MCF 10A (cell line): ENCODE measurements at regions of chr7 and their contacts with region 1.

Region 1: GRCh38 chr7:36021367-36021766 is 131.7 kb upstream of the EEPD1 start:
- DNase-seq: peak; percentile 39
- H3K4me3 Mint-ChIP-seq: no peak overlapping the region
- H3K27ac Mint-ChIP-seq: no peak overlapping the region
- H3K4me1 Mint-ChIP-seq: peaks cover 8% of the 10 kb centered on the region
- H3K27me3 Mint-ChIP-seq: no peaks in the 10 kb centered on the region
- CTCF ChIP-seq: peak; percentile 54

Region 2: GRCh38 chr7:35630024-35630972 is 391.1 kb before region 1 on chr7:
- CTCF ChIA-PET with region 1: no interaction called
- POLR2A ChIA-PET with region 1: no interaction called
- intact Hi-C with region 1: no loop called
- DNase-seq: peak; percentile 54
- H3K4me3 Mint-ChIP-seq: no peak overlapping the region
- H3K27ac Mint-ChIP-seq: no peak overlapping the region
- H3K4me1 Mint-ChIP-seq: peaks cover 6% of the 10 kb centered on the region
- H3K27me3 Mint-ChIP-seq: no peaks in the 10 kb centered on the region
- CTCF ChIP-seq: no peak

Region 3: GRCh38 chr7:35753761-35754603 is 267.4 kb before region 1 on chr7:
- CTCF ChIA-PET with region 1: no interaction called
- POLR2A ChIA-PET with region 1: no interaction called
- intact Hi-C with region 1: no loop called
- DNase-seq: no peak
- H3K4me3 Mint-ChIP-seq: no peak overlapping the region
- H3K27ac Mint-ChIP-seq: no peak overlapping the region
- H3K4me1 Mint-ChIP-seq: no peaks in the 10 kb centered on the region
- H3K27me3 Mint-ChIP-seq: no peaks in the 10 kb centered on the region
- CTCF ChIP-seq: no peak

Region 4: DNA sequence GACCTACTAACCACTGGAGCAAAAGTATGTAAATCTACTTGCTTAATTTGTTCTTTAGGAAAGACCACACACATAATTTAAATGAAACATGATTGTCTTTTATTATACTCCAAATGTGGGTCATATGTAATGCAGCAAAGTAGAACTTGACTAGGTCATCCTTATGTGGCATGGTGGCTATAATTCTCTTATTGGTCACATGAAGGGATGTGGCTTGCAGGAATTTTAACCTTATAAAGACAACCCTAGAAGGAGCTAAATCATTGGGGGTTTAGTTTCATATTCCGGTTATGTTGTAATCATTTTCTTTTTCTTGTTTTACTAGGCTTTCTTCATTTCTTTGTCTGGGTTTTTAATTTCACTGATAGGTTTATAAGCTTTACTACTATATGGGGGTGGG is 126.6 kb before region 1 on chr7:
- CTCF ChIA-PET with region 1: no interaction called
- POLR2A ChIA-PET with region 1: no interaction called
- intact Hi-C with region 1: no loop called
- DNase-seq: no peak
- H3K4me3 Mint-ChIP-seq: no peak overlapping the region
- H3K27ac Mint-ChIP-seq: no peak overlapping the region
- H3K4me1 Mint-ChIP-seq: peaks cover 5% of the 10 kb centered on the region
- H3K27me3 Mint-ChIP-seq: no peaks in the 10 kb centered on the region
- CTCF ChIP-seq: no peak

Region 5: GRCh38 chr7:36057323-36057722 is 36.0 kb after region 1 on chr7:
- CTCF ChIA-PET with region 1: no interaction called
- POLR2A ChIA-PET with region 1: no interaction called
- intact Hi-C with region 1: no loop called
- DNase-seq: no peak
- H3K4me3 Mint-ChIP-seq: no peak overlapping the region
- H3K27ac Mint-ChIP-seq: no peak overlapping the region
- H3K4me1 Mint-ChIP-seq: peaks cover 6% of the 10 kb centered on the region
- H3K27me3 Mint-ChIP-seq: peaks cover 27% of the 10 kb centered on the region
- CTCF ChIP-seq: no peak

Region 6: DNA sequence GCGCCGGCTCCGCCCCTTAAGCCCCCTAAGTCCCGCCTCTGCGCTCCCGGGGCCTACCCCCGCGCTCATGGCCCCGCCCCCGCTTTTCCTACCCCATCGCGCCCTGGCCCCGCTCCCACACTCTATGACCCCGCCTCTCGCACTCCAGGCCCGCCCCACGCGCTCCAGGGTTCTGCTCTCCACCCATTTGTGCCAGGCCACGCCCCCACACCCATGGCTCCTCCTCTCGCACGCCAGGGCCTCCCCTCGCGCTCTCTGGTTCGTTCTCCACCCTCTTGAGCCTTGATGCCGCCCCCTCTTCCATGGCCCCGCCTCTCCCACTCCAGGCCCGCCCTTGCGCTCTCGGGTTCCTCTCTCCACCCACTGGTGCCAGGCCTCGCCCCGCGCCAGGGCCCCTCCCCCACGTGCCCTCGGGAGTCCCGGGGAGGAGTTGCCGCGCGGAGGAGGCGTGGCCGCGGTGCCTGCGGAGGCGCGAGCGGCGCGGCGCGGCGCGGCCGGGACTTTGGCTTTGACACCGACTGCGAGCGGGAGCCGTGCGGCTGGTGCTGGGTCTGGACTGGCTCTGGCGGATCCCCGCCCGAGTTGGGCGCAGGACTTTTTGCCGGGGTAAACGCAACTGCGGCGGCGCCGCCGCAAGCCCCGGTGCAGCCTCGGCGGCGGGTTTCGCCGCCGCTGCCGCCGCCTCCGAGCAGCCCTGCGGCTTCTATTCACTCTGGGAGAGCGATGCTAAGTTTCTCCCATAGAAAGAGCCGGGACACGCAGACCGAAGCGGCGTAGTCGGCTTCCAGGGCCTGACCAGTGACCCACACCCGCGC is 131.6 kb after region 1 on chr7 and contains the start of gene EEPD1:
- CTCF ChIA-PET with region 1: no interaction called
- POLR2A ChIA-PET with region 1: no interaction called
- intact Hi-C with region 1: loop called (anchors 10 kb)
- DNase-seq: peak; percentile 99
- H3K4me3 Mint-ChIP-seq: peak within 1 kb of the TSS; percentile 72
- H3K27ac Mint-ChIP-seq: peak within 1 kb of the TSS; percentile 3
- H3K4me1 Mint-ChIP-seq: no peaks in the 10 kb centered on the region
- H3K27me3 Mint-ChIP-seq: no peaks in the 10 kb centered on the region
- CTCF ChIP-seq: no peak
- total RNA-seq, gene EEPD1: 0.37 and 0.70 TPM in 2 replicates